ENCODE measurements at regions of chr2 and their contacts with region 1.

Region 1: DNA sequence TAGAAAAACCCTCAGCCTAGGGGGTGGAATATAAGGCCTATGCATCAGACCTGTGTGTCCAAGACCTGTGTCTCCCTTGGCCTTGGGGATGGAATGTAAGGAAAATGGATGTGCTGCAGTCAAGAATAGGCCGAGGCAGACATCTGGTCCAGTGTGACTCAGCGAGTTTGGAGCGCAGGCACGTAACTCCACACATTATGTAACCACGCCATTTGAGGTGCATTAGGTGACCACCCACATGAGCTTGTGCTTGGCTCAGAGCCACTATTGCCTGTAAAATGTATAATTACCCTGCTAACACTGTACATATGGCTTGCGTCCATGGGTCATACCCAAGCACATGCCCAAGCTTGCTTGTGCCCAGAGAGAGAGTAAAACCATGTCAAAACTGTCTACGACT is 580.9 kb upstream of the HNMT start:
- DNase-seq: no peak
- H3K4me3 ChIP-seq: no peak overlapping the region
- H3K27ac ChIP-seq: no peak overlapping the region
- H3K4me1 ChIP-seq: peaks cover 5% of the 10 kb centered on the region
- H3K27me3 ChIP-seq: no peaks in the 10 kb centered on the region
- CTCF ChIP-seq: no peak

Region 2: DNA sequence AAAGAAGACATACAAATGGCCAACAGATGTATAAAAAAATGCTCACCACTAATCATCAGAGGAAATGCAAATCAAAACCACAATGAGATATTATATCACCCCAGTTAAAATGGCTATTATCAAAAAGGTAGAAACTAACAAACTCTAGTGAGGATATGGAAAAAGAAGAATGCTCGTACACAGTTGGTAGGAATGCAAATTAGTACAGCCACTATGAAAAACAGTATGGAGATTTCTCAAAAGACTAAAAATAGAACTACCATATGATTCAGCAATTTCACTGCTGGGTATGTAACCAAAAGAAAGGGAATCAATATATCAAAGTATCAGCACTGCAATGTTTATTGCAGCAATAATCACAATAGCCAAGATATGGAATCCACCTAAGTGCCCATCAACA is 61.6 kb after region 1 on chr2:
- CTCF ChIA-PET with region 1: no interaction called
- dilution Hi-C with region 1: loop called (anchors 5 kb)
- in situ Hi-C with region 1: no loop called
- intact Hi-C with region 1: no loop called
- DNase-seq: no peak
- H3K4me3 ChIP-seq: no peak overlapping the region
- H3K27ac ChIP-seq: no peak overlapping the region
- H3K4me1 ChIP-seq: no peaks in the 10 kb centered on the region
- H3K27me3 ChIP-seq: no peaks in the 10 kb centered on the region
- CTCF ChIP-seq: no peak

Measured in mammary epithelial cell (primary cell).